ENCODE measurements at regions of chr1 and their contacts with region 1.

Region 1: DNA sequence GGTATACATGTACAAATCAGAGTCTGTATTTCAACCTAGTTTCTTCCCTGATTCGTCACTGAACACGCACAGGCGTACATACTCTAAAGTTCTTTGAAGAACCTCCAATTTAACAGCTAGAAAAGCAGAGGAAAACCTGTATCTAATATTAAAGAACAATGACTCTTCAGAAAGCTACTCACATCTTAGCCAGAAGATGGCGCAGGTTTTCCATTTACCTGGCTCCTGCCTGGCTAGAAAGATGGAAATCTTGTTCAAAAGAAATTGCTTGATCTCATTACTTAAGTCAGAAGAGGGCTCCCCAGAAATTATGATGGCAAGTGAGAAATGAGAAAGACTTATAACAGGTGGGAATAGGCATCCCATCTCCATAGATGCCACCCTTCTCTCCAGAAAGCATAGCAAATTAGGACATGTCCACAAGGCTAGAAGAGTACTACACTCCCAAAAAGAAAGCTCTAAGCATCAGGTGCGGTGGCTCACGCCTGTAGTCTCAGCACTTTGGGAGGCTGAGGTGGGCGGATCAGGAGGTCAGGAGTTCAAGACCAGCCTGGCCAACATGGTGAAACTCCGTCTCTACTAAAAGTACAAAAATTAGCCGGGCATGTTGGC is 19.0 kb upstream of the L1TD1 start:
- DNase-seq: peak; percentile 45 to 61
- H3K4me3 ChIP-seq: no peak overlapping the region
- H3K27ac ChIP-seq: no peak overlapping the region
- H3K4me1 ChIP-seq: peaks cover 11% of the 10 kb centered on the region
- H3K27me3 ChIP-seq: no peaks in the 10 kb centered on the region
- CTCF ChIP-seq: peak; percentile 86

Region 2: DNA sequence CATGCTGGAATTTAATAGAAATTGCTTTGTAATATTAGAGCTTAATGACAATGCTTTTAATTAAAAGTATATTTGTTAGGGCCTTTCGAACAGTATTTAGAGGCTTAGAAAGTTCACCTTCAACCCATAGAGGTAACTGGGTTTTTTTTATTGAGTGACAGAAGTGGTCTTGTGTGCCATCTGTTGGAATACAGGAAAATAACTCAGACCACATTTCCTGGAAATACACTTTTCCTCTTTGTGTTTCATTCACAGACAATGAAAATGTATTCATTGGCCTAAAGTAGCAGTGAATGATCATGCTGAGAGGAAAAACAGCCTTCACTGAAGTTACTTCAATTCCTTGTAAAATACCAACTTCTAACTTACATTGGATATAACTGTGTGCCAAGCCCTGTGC is 64.6 kb before region 1 on chr1:
- CTCF ChIA-PET with region 1: no interaction called
- POLR2A ChIA-PET with region 1: no interaction called
- intact Hi-C with region 1: no loop called
- DNase-seq: no peak
- H3K4me3 ChIP-seq: no peak overlapping the region
- H3K27ac ChIP-seq: no peak overlapping the region
- H3K4me1 ChIP-seq: no peaks in the 10 kb centered on the region
- H3K27me3 ChIP-seq: no peaks in the 10 kb centered on the region
- CTCF ChIP-seq: no peak

Region 3: DNA sequence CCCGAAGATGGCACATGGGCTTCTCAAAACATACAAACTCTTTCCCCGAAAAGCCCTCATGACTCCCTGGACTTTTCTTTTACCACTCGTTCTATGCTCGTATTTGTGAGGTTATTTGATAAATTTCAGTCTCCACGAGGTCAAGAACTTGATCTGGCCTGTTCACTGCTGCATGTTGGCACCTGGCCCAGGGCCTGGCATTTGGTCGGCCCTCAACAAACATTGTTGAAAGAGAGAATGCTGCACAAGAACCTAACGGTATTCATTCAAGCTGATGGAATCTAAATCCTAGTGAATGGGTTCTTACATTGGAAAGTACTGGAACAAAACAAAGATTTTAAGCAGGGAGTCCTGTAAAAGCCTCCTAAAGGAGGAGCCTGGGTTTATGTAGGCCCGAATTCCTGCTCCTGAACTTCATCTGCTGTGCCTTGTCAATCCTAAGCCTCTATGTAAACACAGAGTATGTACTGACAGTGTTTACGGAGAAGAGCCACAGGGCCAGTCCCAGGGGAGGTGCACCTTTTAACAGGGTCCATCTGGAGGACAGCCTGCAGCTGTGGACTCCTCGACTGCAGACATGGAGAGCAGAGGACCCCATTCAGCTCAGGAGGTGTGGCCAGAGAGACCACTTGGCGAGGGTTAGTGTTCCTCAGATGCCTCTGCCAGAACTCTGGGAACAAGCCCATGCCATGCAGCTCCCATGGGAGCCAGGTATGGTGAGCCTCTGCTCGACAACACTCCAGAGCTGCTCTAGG is 65.9 kb after region 1 on chr1:
- CTCF ChIA-PET with region 1: no interaction called
- POLR2A ChIA-PET with region 1: interaction called, 10 read pairs
- intact Hi-C with region 1: no loop called
- DNase-seq: peak; percentile 56 to 57
- H3K4me3 ChIP-seq: no peak overlapping the region
- H3K27ac ChIP-seq: no peak overlapping the region
- H3K4me1 ChIP-seq: peaks cover 31% of the 10 kb centered on the region
- H3K27me3 ChIP-seq: no peaks in the 10 kb centered on the region
- CTCF ChIP-seq: no peak

Region 4: DNA sequence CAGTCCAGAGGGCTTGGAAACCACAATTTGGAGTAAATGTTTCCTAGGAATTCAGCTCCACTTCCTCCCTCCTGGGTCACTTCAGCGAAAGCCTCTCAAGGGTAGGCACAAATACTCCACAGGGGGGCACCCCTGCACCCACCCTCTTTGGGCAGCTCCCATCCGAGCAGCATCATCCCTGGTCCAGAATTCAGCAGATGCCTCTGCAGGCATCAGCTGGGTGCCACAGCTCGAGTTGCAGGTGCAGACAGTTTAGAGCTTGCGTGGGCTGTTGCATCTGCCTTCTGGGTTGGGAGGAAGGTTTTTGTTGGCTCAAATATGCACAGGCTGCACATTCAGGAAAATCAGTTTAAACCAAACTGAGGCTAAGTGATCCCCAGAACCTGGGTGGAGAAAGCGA is 118.6 kb after region 1 on chr1:
- CTCF ChIA-PET with region 1: interaction called, 11 read pairs
- POLR2A ChIA-PET with region 1: no interaction called
- intact Hi-C with region 1: loop called (anchors 1 kb)
- DNase-seq: peak in 1 of 2 experiments; percentile 48
- H3K4me3 ChIP-seq: no peak overlapping the region
- H3K27ac ChIP-seq: no peak overlapping the region
- H3K4me1 ChIP-seq: no peaks in the 10 kb centered on the region
- H3K27me3 ChIP-seq: no peaks in the 10 kb centered on the region
- CTCF ChIP-seq: peak; percentile 63

Region 5: DNA sequence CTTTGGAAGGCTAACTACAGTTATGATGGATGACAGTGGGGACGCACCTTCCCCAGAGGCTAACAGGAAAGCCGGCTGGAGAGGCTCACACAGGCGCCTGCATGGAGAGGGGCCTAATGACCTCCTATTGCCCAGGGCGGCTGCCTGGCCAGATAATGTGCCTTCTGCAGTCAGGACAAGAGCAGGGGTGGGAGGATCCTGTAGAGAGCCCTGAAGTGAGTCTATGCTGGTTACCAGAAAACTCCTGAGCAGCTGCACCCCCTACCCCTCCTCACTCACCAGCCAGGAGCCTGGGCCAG is 132.5 kb after region 1 on chr1:
- CTCF ChIA-PET with region 1: no interaction called
- POLR2A ChIA-PET with region 1: no interaction called
- intact Hi-C with region 1: loop called (anchors 1 kb)
- DNase-seq: peak; percentile 89 to 95
- H3K4me3 ChIP-seq: no peak overlapping the region
- H3K27ac ChIP-seq: peak overlapping the region; percentile 73
- H3K4me1 ChIP-seq: peaks cover 62% of the 10 kb centered on the region
- H3K27me3 ChIP-seq: no peaks in the 10 kb centered on the region
- CTCF ChIP-seq: no peak

Region 6: GRCh38 chr1:62436466-62437256 is 261.0 kb after region 1 on chr1 and contains the start of gene USP1:
- CTCF ChIA-PET with region 1: interaction called, 5 read pairs
- POLR2A ChIA-PET with region 1: interaction called, 3 read pairs
- intact Hi-C with region 1: loop called (anchors 1 kb)
- DNase-seq: peak; percentile 99
- H3K4me3 ChIP-seq: peak within 1 kb of the TSS; percentile 100
- H3K27ac ChIP-seq: peak within 1 kb of the TSS; percentile 95
- H3K4me1 ChIP-seq: peaks cover 23% of the 10 kb centered on the region
- H3K27me3 ChIP-seq: no peaks in the 10 kb centered on the region
- CTCF ChIP-seq: no peak
- total RNA-seq, gene USP1: 42.1 and 50.3 TPM in 2 replicates

Measured in PC-9 (cell line).